CD14-positive monocyte (primary cell): ENCODE measurements at regions of chr2 and their contacts with region 1.

Region 1: GRCh38 chr2:171416009-171416926 is 17.5 kb downstream of the METTL8 start:
- DNase-seq: peak; percentile 53 to 65 (median 62)
- H3K4me3 ChIP-seq: no peak overlapping the region
- H3K4me3 Mint-ChIP-seq: no peak overlapping the region
- H3K27ac ChIP-seq: no peak overlapping the region
- H3K27ac Mint-ChIP-seq: no peak overlapping the region
- H3K4me1 ChIP-seq: no peaks in the 10 kb centered on the region
- H3K4me1 Mint-ChIP-seq: peaks cover 12% of the 10 kb centered on the region
- H3K27me3 ChIP-seq: no peaks in the 10 kb centered on the region
- H3K27me3 Mint-ChIP-seq: peaks cover 0 to 2% (median 0%) of the 10 kb centered on the region in 3 donors
- CTCF ChIP-seq: peak; percentile 76

Region 2: GRCh38 chr2:170973492-170974303 is 442.6 kb before region 1 on chr2:
- intact Hi-C with region 1: loop called (anchors 5 to 10 kb)
- DNase-seq: peak; percentile 60 to 69 (median 64)
- H3K4me3 ChIP-seq: peak overlapping the region; percentile 60 to 90 (median 82)
- H3K4me3 Mint-ChIP-seq: peak overlapping the region; percentile 83 to 88
- H3K27ac ChIP-seq: peak overlapping the region; percentile 20 to 53
- H3K27ac Mint-ChIP-seq: peak overlapping the region in 2 of 7 donors; percentile 47 to 71
- H3K4me1 ChIP-seq: peaks cover 6 to 14% of the 10 kb centered on the region in 2 donors
- H3K4me1 Mint-ChIP-seq: peaks cover 15% of the 10 kb centered on the region
- H3K27me3 ChIP-seq: peaks cover 0 to 16% of the 10 kb centered on the region in 2 donors
- H3K27me3 Mint-ChIP-seq: peaks cover 4 to 23% (median 8%) of the 10 kb centered on the region in 3 donors
- CTCF ChIP-seq: peak; percentile 98

Region 3: GRCh38 chr2:171260471-171261424 is 155.5 kb before region 1 on chr2:
- intact Hi-C with region 1: loop called in 1 of 2 experiments (anchors 5 kb)
- DNase-seq: no peak
- H3K4me3 ChIP-seq: no peak overlapping the region
- H3K4me3 Mint-ChIP-seq: peak overlapping the region in 1 of 2 donors; percentile 56
- H3K27ac ChIP-seq: no peak overlapping the region
- H3K27ac Mint-ChIP-seq: peak overlapping the region in 1 of 7 donors; percentile 11
- H3K4me1 ChIP-seq: peaks cover 9 to 16% of the 10 kb centered on the region in 2 donors
- H3K4me1 Mint-ChIP-seq: peaks cover 16% of the 10 kb centered on the region
- H3K27me3 ChIP-seq: no peaks in the 10 kb centered on the region
- H3K27me3 Mint-ChIP-seq: peaks cover 1 to 3% (median 2%) of the 10 kb centered on the region in 3 donors
- CTCF ChIP-seq: no peak